Activated B cell treated with CpG ODN at 0.5 μM for 24 hours (primary cell): ENCODE measurements at regions of chr10 and their contacts with region 1.

Region 1: GRCh38 chr10:95755511-95756004 is 405 bp upstream of the ENTPD1 start:
- DNase-seq: no peak
- ATAC-seq: no peak
- H3K4me3 Mint-ChIP-seq: peak overlapping the region; percentile 94
- H3K27ac Mint-ChIP-seq: peak overlapping the region; percentile 95
- H3K4me1 Mint-ChIP-seq: peaks cover 61% of the 10 kb centered on the region
- H3K27me3 Mint-ChIP-seq: no peaks in the 10 kb centered on the region
- CTCF ChIP-seq: no peak

Region 2: DNA sequence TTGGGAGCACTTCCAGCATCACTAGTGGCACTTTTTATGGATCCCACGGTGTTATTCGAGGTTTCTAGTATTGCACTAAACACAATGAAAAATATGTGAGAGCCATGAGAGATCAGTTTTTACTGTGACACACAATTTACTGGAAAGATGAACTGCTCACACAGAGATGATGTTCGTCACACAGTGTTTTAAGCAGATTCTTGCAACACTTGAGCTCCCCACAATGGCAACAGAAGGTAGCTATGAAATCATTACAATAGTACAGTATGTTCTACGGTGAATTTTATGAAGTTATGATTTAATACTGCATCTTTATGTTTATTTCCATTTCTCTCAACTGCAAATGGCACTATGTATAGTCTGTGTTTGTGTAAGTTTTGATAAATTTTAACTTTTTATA is 27.0 kb before region 1 on chr10:
- CTCF ChIA-PET with region 1: interaction called, 3 read pairs
- POLR2A ChIA-PET with region 1: interaction called, 29 read pairs
- intact Hi-C with region 1: loop called (anchors 1 kb)
- DNase-seq: no peak
- ATAC-seq: no peak
- H3K4me3 Mint-ChIP-seq: no peak overlapping the region
- H3K27ac Mint-ChIP-seq: no peak overlapping the region
- H3K4me1 Mint-ChIP-seq: peaks cover 34% of the 10 kb centered on the region
- H3K27me3 Mint-ChIP-seq: no peaks in the 10 kb centered on the region
- CTCF ChIP-seq: no peak

Region 3: GRCh38 chr10:95767884-95768556 is 12.5 kb after region 1 on chr10:
- CTCF ChIA-PET with region 1: no interaction called
- POLR2A ChIA-PET with region 1: interaction called, 50 read pairs
- intact Hi-C with region 1: loop called (anchors 1 kb)
- DNase-seq: peak; percentile 32
- ATAC-seq: peak; percentile 89
- H3K4me3 Mint-ChIP-seq: peak overlapping the region; percentile 74
- H3K27ac Mint-ChIP-seq: peak overlapping the region; percentile 97
- H3K4me1 Mint-ChIP-seq: peaks cover 77% of the 10 kb centered on the region
- H3K27me3 Mint-ChIP-seq: no peaks in the 10 kb centered on the region
- CTCF ChIP-seq: no peak

Region 4: DNA sequence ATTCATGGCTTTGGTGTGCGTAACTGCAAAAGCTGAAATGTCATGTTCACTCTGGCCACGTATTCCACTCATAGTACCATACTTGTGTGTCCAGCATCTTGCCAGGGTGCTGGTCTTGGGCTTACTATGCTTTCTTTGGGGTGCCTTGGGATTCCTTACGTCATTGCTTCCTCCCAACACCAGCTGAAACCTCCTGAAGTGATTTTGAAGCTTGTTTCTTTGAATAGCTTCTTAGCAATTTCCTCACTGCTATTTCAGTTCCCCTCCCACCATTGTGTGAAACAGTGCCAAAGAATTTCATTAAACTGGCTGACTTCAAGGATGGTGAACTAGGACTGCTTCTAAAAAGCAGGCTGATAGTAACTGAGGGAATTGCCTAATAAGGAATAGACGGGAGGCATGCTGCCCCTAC is 37.3 kb after region 1 on chr10:
- CTCF ChIA-PET with region 1: interaction called, 5 read pairs
- POLR2A ChIA-PET with region 1: interaction called, 287 read pairs
- intact Hi-C with region 1: loop called (anchors 1 kb)
- DNase-seq: no peak
- ATAC-seq: peak; percentile 15
- H3K4me3 Mint-ChIP-seq: peak overlapping the region; percentile 32
- H3K27ac Mint-ChIP-seq: peak overlapping the region; percentile 94
- H3K4me1 Mint-ChIP-seq: peaks cover 94% of the 10 kb centered on the region
- H3K27me3 Mint-ChIP-seq: no peaks in the 10 kb centered on the region
- CTCF ChIP-seq: no peak

Region 5: DNA sequence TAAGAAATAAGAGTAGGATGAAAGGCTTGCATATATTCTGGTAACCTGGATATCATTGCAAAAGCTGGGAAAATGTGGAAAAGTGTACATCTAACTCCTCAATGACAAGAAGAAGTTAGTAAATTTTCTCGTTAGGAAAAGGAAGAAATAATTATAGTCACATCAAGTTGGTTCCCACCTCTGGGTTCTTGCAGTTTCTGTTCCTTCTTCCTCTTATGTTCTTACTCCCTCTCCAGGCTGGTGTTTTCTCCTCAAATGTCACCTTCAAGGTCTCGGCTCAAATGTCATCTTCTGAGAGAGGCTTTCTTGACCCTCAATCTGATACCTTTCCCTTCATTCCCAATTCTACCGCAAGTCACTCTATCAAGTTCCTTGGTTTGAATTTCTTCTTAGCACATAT is 64.8 kb after region 1 on chr10:
- CTCF ChIA-PET with region 1: interaction called, 11 read pairs
- POLR2A ChIA-PET with region 1: interaction called, 572 read pairs
- intact Hi-C with region 1: loop called (anchors 1 kb)
- DNase-seq: no peak
- ATAC-seq: peak; percentile 78
- H3K4me3 Mint-ChIP-seq: peak overlapping the region; percentile 72
- H3K27ac Mint-ChIP-seq: peak overlapping the region; percentile 93
- H3K4me1 Mint-ChIP-seq: peaks cover 80% of the 10 kb centered on the region
- H3K27me3 Mint-ChIP-seq: no peaks in the 10 kb centered on the region
- CTCF ChIP-seq: no peak

Region 6: GRCh38 chr10:95841661-95842498 is 86.3 kb after region 1 on chr10:
- CTCF ChIA-PET with region 1: interaction called, 79 read pairs
- POLR2A ChIA-PET with region 1: interaction called, 572 read pairs
- intact Hi-C with region 1: loop called (anchors 1 kb)
- DNase-seq: no peak
- ATAC-seq: peak; percentile 41
- H3K4me3 Mint-ChIP-seq: peak overlapping the region; percentile 66
- H3K27ac Mint-ChIP-seq: peak overlapping the region; percentile 95
- H3K4me1 Mint-ChIP-seq: peaks cover 54% of the 10 kb centered on the region
- H3K27me3 Mint-ChIP-seq: no peaks in the 10 kb centered on the region
- CTCF ChIP-seq: no peak

Region 7: GRCh38 chr10:96271016-96271829 is 515.7 kb after region 1 on chr10 and contains the start of gene BLNK:
- CTCF ChIA-PET with region 1: no interaction called
- POLR2A ChIA-PET with region 1: no interaction called
- intact Hi-C with region 1: loop called (anchors 1 kb)
- DNase-seq: peak; percentile 40
- ATAC-seq: peak; percentile 56
- H3K4me3 Mint-ChIP-seq: peak within 1 kb of the TSS; percentile 91
- H3K27ac Mint-ChIP-seq: peak within 1 kb of the TSS; percentile 98
- H3K4me1 Mint-ChIP-seq: peaks cover 81% of the 10 kb centered on the region
- H3K27me3 Mint-ChIP-seq: no peaks in the 10 kb centered on the region
- CTCF ChIP-seq: no peak
- total RNA-seq, gene BLNK: 238 and 267 TPM in 2 replicates